ENCODE measurements at regions of chr11 and their contacts with region 1.

Region 1: DNA sequence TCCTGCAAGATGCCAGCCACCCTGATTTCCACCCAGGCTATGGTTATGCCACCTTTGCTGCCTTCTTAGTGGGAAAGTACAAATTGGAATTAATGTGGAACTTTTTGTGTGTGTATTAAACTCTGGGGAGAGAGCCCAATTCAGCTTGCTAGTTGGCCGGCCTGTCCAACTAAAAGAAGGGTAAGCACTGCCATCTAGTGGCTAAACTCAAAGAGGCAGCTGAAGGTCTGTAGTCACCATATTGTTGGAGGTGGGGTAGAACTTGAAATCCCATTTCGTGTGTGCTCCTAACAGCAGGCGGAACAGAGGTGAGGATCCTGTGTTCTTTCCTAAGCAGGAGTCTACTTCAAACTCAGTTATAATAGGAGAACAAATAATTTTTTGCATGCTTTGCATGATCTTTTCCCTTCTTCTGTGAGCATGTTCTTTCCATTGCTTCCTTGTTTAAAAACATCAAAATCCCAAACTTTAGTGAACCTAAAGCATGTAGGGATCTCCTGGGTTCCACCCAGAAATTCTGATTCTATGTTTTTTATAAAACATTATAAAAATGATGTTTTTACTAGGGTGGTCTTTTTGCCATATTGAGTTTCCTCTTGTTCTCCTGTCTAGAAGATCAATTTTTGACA is 138.8 kb upstream of the SORL1-AS1 start:
- DNase-seq: peak; percentile 80
- H3K27ac ChIP-seq: no peak overlapping the region
- CTCF ChIP-seq: peak; percentile 82

Region 2: GRCh38 chr11:121318848-121319834 is 272.4 kb before region 1 on chr11:
- CTCF ChIA-PET with region 1: interaction called, 22 read pairs
- POLR2A ChIA-PET with region 1: no interaction called
- DNase-seq: peak; percentile 59
- H3K27ac ChIP-seq: no peak overlapping the region
- CTCF ChIP-seq: peak; percentile 82